Caco-2 (cell line): ENCODE measurements at regions of chr11 and their contacts with region 1.

Region 1: DNA sequence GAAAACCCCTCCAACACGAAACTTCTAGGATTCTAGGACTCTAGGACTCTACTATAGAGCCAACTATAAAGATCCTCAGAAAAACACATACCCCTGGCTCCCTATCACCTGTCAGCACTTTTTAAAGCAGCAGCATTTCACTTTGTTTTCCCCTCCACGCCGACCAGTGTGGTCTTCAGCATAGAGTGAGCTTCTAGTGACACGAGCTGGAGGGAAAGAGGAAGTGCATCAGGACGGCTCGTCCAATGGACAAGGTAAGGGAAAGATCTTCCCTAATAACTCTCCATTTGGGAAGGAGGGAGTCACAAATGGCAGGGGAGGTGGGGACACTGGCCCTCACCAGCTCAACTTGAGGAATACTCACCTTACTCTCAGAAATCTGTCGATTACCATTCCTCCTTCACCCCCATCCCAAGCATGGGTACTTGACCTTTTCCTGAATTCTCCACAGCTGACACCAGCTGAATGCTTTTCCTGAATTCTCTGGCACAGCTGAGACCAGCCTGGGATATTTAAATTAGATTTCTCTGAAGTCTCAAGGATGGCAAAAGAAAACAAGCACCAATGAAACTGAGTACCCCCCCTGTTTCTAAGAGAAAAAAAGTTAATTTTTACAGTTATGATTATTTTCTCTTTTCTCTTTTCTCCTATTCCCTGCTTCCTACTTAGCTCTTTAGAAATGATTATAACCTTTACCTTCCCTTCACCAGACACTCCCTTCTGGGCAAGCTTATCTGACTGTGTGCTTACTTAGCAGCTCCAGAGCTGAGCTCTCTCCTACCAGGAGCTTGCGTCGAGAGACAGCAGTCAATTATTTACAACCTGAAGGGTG is 33.3 kb upstream of the NNMT start:
- DNase-seq: peak; percentile 74 to 77
- H3K4me3 ChIP-seq: no peak overlapping the region
- H3K4me3 Mint-ChIP-seq: no peak overlapping the region
- H3K27ac Mint-ChIP-seq: no peak overlapping the region
- H3K4me1 ChIP-seq: peaks cover 13% of the 10 kb centered on the region
- H3K4me1 Mint-ChIP-seq: no peaks in the 10 kb centered on the region
- H3K27me3 ChIP-seq: 0 out of 2 replicates have a peak, but pooled peaks cover 1% of the 10 kb centered on the region
- H3K27me3 Mint-ChIP-seq: no peaks in the 10 kb centered on the region
- CTCF ChIP-seq: peak; percentile 93 to 96

Region 2: GRCh38 chr11:113896156-113896879 is 366.6 kb before region 1 on chr11:
- CTCF ChIA-PET with region 1: interaction called, 86 read pairs
- POLR2A ChIA-PET with region 1: no interaction called
- intact Hi-C with region 1: loop called (anchors 1 kb)
- DNase-seq: peak in 1 of 2 experiments; percentile 55
- H3K4me3 ChIP-seq: no peak overlapping the region
- H3K4me3 Mint-ChIP-seq: no peak overlapping the region
- H3K27ac Mint-ChIP-seq: no peak overlapping the region
- H3K4me1 ChIP-seq: no peaks in the 10 kb centered on the region
- H3K4me1 Mint-ChIP-seq: peaks cover 7% of the 10 kb centered on the region
- H3K27me3 ChIP-seq: no peaks in the 10 kb centered on the region
- H3K27me3 Mint-ChIP-seq: peaks cover 3% of the 10 kb centered on the region
- CTCF ChIP-seq: peak; percentile 93

Region 3: GRCh38 chr11:114026355-114026754 is 236.5 kb before region 1 on chr11:
- CTCF ChIA-PET with region 1: interaction called, 72 read pairs
- POLR2A ChIA-PET with region 1: no interaction called
- intact Hi-C with region 1: loop called (anchors 1 kb)
- DNase-seq: peak in 1 of 2 experiments; percentile 53
- H3K4me3 ChIP-seq: no peak overlapping the region
- H3K4me3 Mint-ChIP-seq: no peak overlapping the region
- H3K27ac Mint-ChIP-seq: no peak overlapping the region
- H3K4me1 ChIP-seq: peaks cover 8% of the 10 kb centered on the region
- H3K4me1 Mint-ChIP-seq: peaks cover 9% of the 10 kb centered on the region
- H3K27me3 ChIP-seq: peaks cover 1% of the 10 kb centered on the region
- H3K27me3 Mint-ChIP-seq: peaks cover 2% of the 10 kb centered on the region
- CTCF ChIP-seq: peak; percentile 62 to 76

Region 4: DNA sequence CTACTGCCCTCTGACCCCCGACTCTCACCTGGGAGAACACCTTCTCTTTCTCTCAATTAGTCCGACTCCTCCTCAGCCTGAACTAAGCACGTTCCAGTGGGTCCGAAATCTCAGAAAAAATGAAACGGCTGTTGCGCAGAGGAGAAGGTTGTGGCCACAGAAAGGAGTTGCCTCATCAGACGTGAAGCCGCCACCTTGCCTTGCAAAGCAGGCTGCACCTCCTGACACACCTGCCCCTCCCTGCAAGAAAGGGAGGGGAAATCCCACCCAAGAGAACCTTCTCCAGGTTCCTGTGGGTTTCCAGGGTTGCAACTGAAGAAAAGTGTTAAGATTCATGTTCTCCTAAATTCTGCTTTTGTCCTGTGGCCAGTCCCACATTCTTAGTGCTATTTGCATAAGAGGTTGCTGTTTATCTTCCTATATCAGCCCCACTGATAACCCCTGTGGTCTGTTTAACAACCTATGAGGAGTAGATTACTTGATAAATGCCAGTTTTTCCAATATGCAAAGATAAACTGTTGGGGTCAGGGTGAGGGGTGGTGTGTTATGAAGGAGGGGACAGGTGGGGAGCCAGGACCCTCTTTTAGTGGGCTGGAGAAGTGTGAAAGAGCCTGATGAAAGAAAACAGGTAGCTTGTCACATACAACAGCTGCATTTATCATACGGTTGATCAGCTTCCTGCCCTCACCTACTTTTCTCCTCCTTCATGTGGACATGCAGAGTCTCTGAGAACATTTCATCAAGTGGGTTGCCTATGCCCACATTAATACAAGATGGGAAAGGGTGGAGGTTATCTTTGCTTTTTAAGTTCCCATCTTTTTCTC is 185.2 kb before region 1 on chr11:
- CTCF ChIA-PET with region 1: interaction called, 11 read pairs
- POLR2A ChIA-PET with region 1: no interaction called
- intact Hi-C with region 1: no loop called
- DNase-seq: peak; percentile 75 to 77
- H3K4me3 ChIP-seq: peak overlapping the region; percentile 25
- H3K4me3 Mint-ChIP-seq: peak overlapping the region; percentile 72
- H3K27ac Mint-ChIP-seq: peak overlapping the region; percentile 90
- H3K4me1 ChIP-seq: peaks cover 66% of the 10 kb centered on the region
- H3K4me1 Mint-ChIP-seq: peaks cover 57% of the 10 kb centered on the region
- H3K27me3 ChIP-seq: no peaks in the 10 kb centered on the region
- H3K27me3 Mint-ChIP-seq: no peaks in the 10 kb centered on the region
- CTCF ChIP-seq: no peak

Region 5: DNA sequence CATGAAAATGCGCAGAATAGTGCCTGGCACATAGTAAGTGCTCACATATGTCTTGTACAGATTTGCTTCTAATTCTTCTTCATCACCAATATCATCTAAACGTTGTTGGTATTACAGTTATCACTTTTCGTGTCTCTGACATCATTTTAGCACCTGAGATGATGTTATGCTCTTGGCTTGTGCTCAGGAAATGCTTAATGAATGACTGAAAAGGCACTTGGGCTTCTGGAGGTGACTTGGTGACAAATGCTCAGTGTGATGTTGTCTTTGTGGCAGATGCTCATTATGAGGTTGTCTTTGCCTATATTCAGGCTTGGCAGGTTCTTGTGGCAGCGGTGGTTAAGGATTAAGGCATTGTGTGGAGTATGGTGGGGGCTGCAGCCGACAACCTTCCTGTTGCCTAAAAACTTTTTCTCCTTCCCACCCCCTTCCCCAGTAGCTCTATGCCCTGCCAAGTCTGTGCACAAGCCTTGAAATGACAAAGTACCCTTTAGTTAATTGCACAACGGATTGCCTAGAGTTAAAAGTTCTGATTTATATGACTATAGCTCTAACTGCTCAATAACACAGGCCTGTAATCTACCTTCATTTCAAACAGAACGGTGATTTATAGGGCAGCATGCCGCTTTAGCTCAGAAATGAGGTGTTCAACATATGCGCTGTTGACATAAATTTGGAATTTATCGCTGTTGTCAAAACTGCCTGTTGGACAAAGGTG is 120.9 kb before region 1 on chr11:
- CTCF ChIA-PET with region 1: no interaction called
- POLR2A ChIA-PET with region 1: no interaction called
- intact Hi-C with region 1: no loop called
- DNase-seq: no peak
- H3K4me3 ChIP-seq: no peak overlapping the region
- H3K4me3 Mint-ChIP-seq: no peak overlapping the region
- H3K27ac Mint-ChIP-seq: no peak overlapping the region
- H3K4me1 ChIP-seq: peaks cover 3% of the 10 kb centered on the region; the same call in 1 of the 2 replicates
- H3K4me1 Mint-ChIP-seq: peaks cover 8% of the 10 kb centered on the region
- H3K27me3 ChIP-seq: no peaks in the 10 kb centered on the region
- H3K27me3 Mint-ChIP-seq: no peaks in the 10 kb centered on the region
- CTCF ChIP-seq: no peak

Region 6: GRCh38 chr11:114192841-114193389 is 70.0 kb before region 1 on chr11:
- CTCF ChIA-PET with region 1: interaction called, 16 read pairs
- POLR2A ChIA-PET with region 1: no interaction called
- intact Hi-C with region 1: loop called (anchors 2 kb)
- DNase-seq: no peak
- H3K4me3 ChIP-seq: no peak overlapping the region
- H3K4me3 Mint-ChIP-seq: no peak overlapping the region
- H3K27ac Mint-ChIP-seq: no peak overlapping the region
- H3K4me1 ChIP-seq: no peaks in the 10 kb centered on the region; the same call in 1 of the 2 replicates
- H3K4me1 Mint-ChIP-seq: peaks cover 7% of the 10 kb centered on the region
- H3K27me3 ChIP-seq: no peaks in the 10 kb centered on the region
- H3K27me3 Mint-ChIP-seq: no peaks in the 10 kb centered on the region
- CTCF ChIP-seq: no peak

Region 7: GRCh38 chr11:114291842-114292680 is 29.2 kb after region 1 on chr11:
- CTCF ChIA-PET with region 1: no interaction called
- POLR2A ChIA-PET with region 1: no interaction called
- intact Hi-C with region 1: no loop called
- DNase-seq: no peak
- H3K4me3 ChIP-seq: no peak overlapping the region
- H3K4me3 Mint-ChIP-seq: no peak overlapping the region
- H3K27ac Mint-ChIP-seq: no peak overlapping the region
- H3K4me1 ChIP-seq: peaks cover 27% of the 10 kb centered on the region; the same call in 1 of the 2 replicates
- H3K4me1 Mint-ChIP-seq: peaks cover 23% of the 10 kb centered on the region
- H3K27me3 ChIP-seq: no peaks in the 10 kb centered on the region
- H3K27me3 Mint-ChIP-seq: no peaks in the 10 kb centered on the region
- CTCF ChIP-seq: no peak

Region 8: GRCh38 chr11:114366331-114367243 is 103.7 kb after region 1 on chr11:
- CTCF ChIA-PET with region 1: no interaction called
- POLR2A ChIA-PET with region 1: no interaction called
- intact Hi-C with region 1: no loop called
- DNase-seq: peak in 1 of 2 experiments; percentile 25
- H3K4me3 ChIP-seq: no peak overlapping the region
- H3K4me3 Mint-ChIP-seq: no peak overlapping the region
- H3K27ac Mint-ChIP-seq: peak overlapping the region; percentile 11
- H3K4me1 ChIP-seq: peaks cover 28% of the 10 kb centered on the region
- H3K4me1 Mint-ChIP-seq: peaks cover 24% of the 10 kb centered on the region
- H3K27me3 ChIP-seq: no peaks in the 10 kb centered on the region
- H3K27me3 Mint-ChIP-seq: no peaks in the 10 kb centered on the region
- CTCF ChIP-seq: no peak

Region 9: DNA sequence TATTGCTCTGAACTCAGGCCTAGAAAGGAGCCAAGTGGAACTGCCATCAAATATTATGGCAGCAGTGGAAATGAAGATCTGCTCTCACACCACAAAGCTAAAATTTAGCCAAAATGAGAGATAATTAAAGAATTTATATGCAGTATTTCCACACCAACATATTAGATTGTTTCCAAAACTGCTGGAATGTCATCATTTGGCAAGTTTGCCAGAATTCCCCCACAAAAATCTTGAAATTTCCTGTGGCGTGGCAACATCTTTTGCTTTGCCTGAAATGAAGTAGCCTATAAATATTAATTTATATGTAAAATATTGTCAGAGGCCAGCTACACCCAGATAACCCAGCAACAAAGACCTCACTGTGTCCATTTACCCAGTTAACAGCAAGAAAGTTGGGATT is 123.6 kb after region 1 on chr11:
- CTCF ChIA-PET with region 1: no interaction called
- POLR2A ChIA-PET with region 1: no interaction called
- intact Hi-C with region 1: no loop called
- DNase-seq: no peak
- H3K4me3 ChIP-seq: no peak overlapping the region
- H3K4me3 Mint-ChIP-seq: no peak overlapping the region
- H3K27ac Mint-ChIP-seq: no peak overlapping the region
- H3K4me1 ChIP-seq: no peaks in the 10 kb centered on the region
- H3K4me1 Mint-ChIP-seq: no peaks in the 10 kb centered on the region
- H3K27me3 ChIP-seq: no peaks in the 10 kb centered on the region
- H3K27me3 Mint-ChIP-seq: peaks cover 5% of the 10 kb centered on the region
- CTCF ChIP-seq: no peak